GM23248 (cell line): ENCODE measurements at regions of chr20 and their contacts with region 1.

Region 1: GRCh38 chr20:14337400-14338171 is at the start of gene FLRT3:
- DNase-seq: peak; percentile 96
- H3K4me3 ChIP-seq: peak within 1 kb of the TSS; percentile 97
- H3K27ac ChIP-seq: peak within 1 kb of the TSS; percentile 74
- H3K4me1 ChIP-seq: peaks cover 15% of the 10 kb centered on the region
- H3K27me3 ChIP-seq: no peaks in the 10 kb centered on the region
- total RNA-seq, gene FLRT3: 2.3 and 2.4 TPM in 2 replicates

Region 2: GRCh38 chr20:14393659-14394058 is 56.1 kb after region 1 on chr20:
- in situ Hi-C with region 1: no loop called
- DNase-seq: no peak
- H3K4me3 ChIP-seq: no peak overlapping the region
- H3K27ac ChIP-seq: no peak overlapping the region
- H3K4me1 ChIP-seq: no peaks in the 10 kb centered on the region
- H3K27me3 ChIP-seq: no peaks in the 10 kb centered on the region

Region 3: DNA sequence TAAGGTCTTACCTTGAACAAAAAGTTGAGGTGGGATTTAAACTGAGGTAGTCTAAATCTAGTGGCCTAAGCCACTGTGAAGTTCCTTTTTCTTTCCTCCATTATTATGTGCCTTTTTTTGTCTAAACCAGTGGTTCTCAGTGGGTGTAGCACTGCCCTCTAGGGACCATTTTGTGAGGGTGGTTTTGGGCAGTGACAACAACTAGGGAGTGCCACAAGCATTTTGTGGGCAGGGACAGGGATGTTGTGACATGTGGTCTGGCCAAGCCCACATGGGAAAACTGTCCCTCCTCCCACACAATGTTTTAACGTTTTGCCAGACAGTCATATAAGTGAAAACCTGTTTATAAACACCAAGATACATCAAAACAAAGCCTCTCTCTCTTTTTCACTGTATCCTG is 899.2 kb after region 1 on chr20:
- in situ Hi-C with region 1: loop called (anchors 25 kb)
- DNase-seq: peak; percentile 71
- H3K4me3 ChIP-seq: no peak overlapping the region
- H3K27ac ChIP-seq: no peak overlapping the region
- H3K4me1 ChIP-seq: peaks cover 15% of the 10 kb centered on the region
- H3K27me3 ChIP-seq: no peaks in the 10 kb centered on the region

Region 4: DNA sequence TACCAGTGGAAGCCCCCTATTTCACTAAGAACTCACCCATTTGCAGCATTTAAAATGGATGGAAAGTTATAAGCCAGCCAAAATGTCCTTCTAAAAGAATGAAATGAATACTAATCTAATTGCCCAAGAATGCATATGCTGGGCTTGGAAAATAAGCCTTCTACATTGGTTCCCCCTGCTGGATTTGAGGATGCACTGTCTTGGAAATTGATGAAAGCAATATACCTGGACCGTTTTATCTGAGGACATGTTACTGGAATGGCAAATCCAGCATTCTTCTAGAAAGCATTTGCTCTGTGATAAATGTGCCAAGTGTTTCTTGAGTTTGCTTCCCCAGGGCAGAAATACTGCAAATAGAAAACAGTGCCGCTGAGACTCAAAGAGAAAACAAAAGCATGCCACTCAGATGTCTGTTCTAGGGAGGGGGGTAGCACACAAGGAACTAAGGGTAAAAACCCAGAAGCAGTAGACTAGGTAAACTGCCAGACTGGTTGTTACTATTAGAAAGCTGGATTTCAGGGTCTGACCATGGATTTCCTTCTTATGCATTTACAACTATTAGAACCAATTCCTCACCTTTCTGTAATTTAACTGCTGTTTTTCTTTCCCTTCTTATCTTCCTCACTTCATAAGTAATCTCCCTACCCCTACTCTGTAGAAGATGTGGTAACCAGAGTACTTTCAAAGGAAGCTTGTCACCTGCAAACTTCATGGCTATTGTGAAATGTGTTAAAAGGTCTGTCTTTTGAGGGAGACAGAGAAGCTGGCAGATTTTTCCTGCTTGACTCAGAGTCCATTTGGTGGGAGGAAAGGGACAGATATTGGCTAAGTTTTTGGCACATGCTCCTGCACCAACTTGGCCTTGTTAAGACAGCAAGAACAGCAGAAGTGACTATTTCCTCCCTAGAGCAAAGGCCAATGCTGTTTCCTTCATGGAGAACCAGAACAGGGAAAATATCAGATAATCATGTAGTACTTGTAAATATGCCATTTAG is 1593.0 kb after region 1 on chr20:
- in situ Hi-C with region 1: loop called (anchors 25 kb)
- DNase-seq: peak; percentile 64
- H3K4me3 ChIP-seq: no peak overlapping the region
- H3K27ac ChIP-seq: no peak overlapping the region
- H3K4me1 ChIP-seq: no peaks in the 10 kb centered on the region
- H3K27me3 ChIP-seq: no peaks in the 10 kb centered on the region